Prostate gland (tissue), 2 donors: ENCODE measurements at regions of chr18 and their contacts with region 1.

Region 1: GRCh38 chr18:13216092-13216582 is 2.4 kb upstream of the LDLRAD4 start:
- DNase-seq: peak; percentile 81
- H3K4me3 ChIP-seq: no peak overlapping the region
- H3K27ac ChIP-seq: no peak overlapping the region
- H3K4me1 ChIP-seq: peaks cover 6% of the 10 kb centered on the region
- H3K27me3 ChIP-seq: no peaks in the 10 kb centered on the region
- CTCF ChIP-seq: peak; percentile 49 to 87 (median 81)
- POLR2A ChIP-seq: no peak

Region 2: DNA sequence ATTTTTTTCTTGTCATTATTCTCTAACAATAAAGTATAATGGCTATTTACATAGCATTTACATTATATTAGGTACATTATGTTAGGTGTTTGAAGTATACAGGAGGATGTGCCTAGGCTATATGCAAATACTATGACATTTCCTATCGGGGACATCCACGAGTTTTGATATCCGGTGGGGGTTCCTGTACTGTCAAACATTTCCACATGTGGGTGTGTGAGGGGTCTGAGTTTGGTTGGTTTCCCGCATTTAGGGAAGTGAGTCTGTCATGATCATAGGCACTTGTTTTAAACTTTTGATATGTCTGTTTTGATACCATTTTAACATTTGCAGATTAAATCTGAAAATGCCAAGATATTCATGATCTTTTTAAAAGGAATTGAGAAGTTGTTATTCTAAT is 149.0 kb before region 1 on chr18:
- intact Hi-C with region 1: no loop called
- DNase-seq: no peak
- H3K4me3 ChIP-seq: no peak overlapping the region
- H3K27ac ChIP-seq: no peak overlapping the region
- H3K4me1 ChIP-seq: no peaks in the 10 kb centered on the region
- H3K27me3 ChIP-seq: no peaks in the 10 kb centered on the region
- CTCF ChIP-seq: no peak
- POLR2A ChIP-seq: no peak

Region 3: GRCh38 chr18:13381944-13382365 is 165.8 kb after region 1 on chr18:
- intact Hi-C with region 1: loop called (anchors 5 kb)
- DNase-seq: peak; percentile 55
- H3K4me3 ChIP-seq: peak overlapping the region in 1 of 2 donors; percentile 24
- H3K27ac ChIP-seq: peak overlapping the region; percentile 47 to 74
- H3K4me1 ChIP-seq: peaks cover 12% of the 10 kb centered on the region
- H3K27me3 ChIP-seq: no peaks in the 10 kb centered on the region
- CTCF ChIP-seq: no peak
- POLR2A ChIP-seq: no peak

Region 4: GRCh38 chr18:13447626-13448334 is 231.6 kb after region 1 on chr18:
- intact Hi-C with region 1: loop called (anchors 5 kb)
- DNase-seq: no peak
- H3K4me3 ChIP-seq: no peak overlapping the region
- H3K27ac ChIP-seq: no peak overlapping the region
- H3K4me1 ChIP-seq: no peaks in the 10 kb centered on the region
- H3K27me3 ChIP-seq: no peaks in the 10 kb centered on the region
- CTCF ChIP-seq: no peak
- POLR2A ChIP-seq: no peak

Region 5: DNA sequence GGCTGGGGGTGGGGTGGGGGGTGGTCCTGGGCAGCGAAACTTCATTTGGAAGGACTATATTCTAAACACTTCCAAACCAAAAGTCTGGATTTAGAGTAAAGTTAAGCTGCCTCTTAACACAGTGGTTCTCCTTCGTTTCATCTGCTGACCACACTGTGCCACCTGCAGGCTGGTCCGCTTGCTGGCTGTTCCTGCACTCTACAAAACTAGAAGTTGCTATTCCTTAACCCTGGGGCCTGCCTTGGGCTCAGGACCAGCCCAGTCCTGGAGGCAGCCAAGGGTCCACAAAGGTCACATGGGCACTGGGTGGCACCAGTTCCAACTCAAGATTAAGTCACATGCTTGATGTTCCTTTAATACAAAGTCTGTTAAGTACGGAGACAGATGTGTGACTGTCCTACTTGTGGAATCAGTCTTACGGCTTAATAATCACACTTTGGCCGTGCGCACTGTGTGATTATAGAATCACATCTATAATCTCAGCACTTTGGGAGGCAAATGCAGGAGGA is 314.8 kb after region 1 on chr18:
- intact Hi-C with region 1: loop called (anchors 1 kb)
- DNase-seq: peak; percentile 38
- H3K4me3 ChIP-seq: no peak overlapping the region
- H3K27ac ChIP-seq: no peak overlapping the region
- H3K4me1 ChIP-seq: no peaks in the 10 kb centered on the region
- H3K27me3 ChIP-seq: no peaks in the 10 kb centered on the region
- CTCF ChIP-seq: peak in 3 of 4 experiments; percentile 35 to 56 (median 55)
- POLR2A ChIP-seq: no peak

Region 6: DNA sequence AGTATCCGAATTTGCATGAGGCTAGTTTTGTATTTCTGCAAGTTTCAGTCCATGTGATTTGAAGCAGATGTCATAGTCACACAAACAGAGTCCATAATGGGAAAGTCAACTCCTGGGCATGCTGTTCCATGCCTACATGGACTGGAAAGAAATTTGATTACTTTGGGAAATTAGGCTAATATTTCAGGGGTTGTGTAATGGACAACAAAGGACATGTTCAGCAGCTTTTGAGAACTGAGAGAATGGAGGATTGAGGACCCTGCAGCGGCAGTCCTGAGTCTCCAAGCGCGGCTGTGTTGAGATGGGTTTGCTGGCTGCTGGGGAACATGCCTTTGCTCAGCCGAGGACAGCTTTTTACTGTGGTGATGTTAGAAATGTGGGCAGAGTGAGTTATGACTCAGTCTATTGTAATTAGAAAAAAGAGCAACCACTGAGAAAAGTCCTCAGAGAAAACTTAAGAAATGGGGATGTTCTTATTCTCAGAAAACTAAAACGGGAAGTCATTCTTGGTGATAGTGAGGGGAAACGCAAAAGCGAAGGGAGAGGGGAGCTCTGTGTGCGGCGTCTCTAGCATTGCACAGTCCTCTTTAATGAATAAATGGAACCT is 361.1 kb after region 1 on chr18:
- intact Hi-C with region 1: no loop called
- DNase-seq: no peak
- H3K4me3 ChIP-seq: no peak overlapping the region
- H3K27ac ChIP-seq: no peak overlapping the region
- H3K4me1 ChIP-seq: no peaks in the 10 kb centered on the region
- H3K27me3 ChIP-seq: no peaks in the 10 kb centered on the region
- CTCF ChIP-seq: no peak
- POLR2A ChIP-seq: no peak

Region 7: DNA sequence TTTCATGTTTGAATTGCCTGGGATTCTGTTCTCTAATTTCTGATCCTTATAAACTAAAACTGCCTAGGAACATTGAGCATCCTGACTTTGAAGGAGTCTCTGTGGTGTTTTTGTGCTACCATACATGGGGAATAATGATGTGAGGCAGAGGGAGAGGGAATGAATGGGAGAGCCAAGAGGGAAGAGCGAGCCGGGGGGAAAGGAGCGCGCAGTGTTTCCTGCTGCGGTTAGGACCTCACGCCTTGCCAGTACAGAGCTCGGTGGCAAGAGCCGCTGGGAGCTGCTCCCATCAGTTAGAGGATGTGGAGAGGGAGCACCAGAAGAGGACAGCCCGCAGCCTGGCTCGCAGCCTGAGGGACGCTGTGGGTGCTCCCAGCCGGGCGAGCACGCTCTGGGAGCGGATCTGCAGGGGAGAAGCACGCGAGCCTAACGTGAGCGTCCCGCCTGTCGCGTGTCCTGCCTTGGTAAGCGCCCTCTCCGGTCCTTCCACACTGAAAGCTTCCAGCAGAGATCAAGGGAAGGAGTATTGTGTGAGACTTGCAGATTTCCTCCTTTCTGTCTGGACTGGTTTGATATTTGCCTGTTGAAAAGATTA is 395.6 kb after region 1 on chr18:
- intact Hi-C with region 1: loop called (anchors 5 kb)
- DNase-seq: no peak
- H3K4me3 ChIP-seq: peak overlapping the region; percentile 22 to 23
- H3K27ac ChIP-seq: peak overlapping the region; percentile 38 to 48
- H3K4me1 ChIP-seq: no peaks in the 10 kb centered on the region
- H3K27me3 ChIP-seq: no peaks in the 10 kb centered on the region
- CTCF ChIP-seq: no peak
- POLR2A ChIP-seq: no peak

Region 8: GRCh38 chr18:13629841-13630715 is 413.9 kb after region 1 on chr18:
- intact Hi-C with region 1: loop called (anchors 1 kb)
- DNase-seq: peak; percentile 37
- H3K4me3 ChIP-seq: no peak overlapping the region
- H3K27ac ChIP-seq: no peak overlapping the region
- H3K4me1 ChIP-seq: no peaks in the 10 kb centered on the region
- H3K27me3 ChIP-seq: no peaks in the 10 kb centered on the region
- CTCF ChIP-seq: peak; percentile 16 to 83 (median 72)
- POLR2A ChIP-seq: no peak

Region 9: GRCh38 chr18:13726232-13726971 is 510.3 kb after region 1 on chr18 and contains the starts of genes FAM210A and RNMT:
- intact Hi-C with region 1: loop called (anchors 5 kb)
- DNase-seq: peak; percentile 95
- H3K4me3 ChIP-seq: peak within 1 kb of the TSS; percentile 77 to 91
- H3K27ac ChIP-seq: peak within 1 kb of the TSS; percentile 88 to 93
- H3K4me1 ChIP-seq: no peaks in the 10 kb centered on the region
- H3K27me3 ChIP-seq: no peaks in the 10 kb centered on the region
- CTCF ChIP-seq: peak in 2 of 4 experiments; percentile 26 to 30
- POLR2A ChIP-seq: peak; percentile 80
- total RNA-seq, gene FAM210A: 10.3 to 12.4 TPM
- total RNA-seq, gene RNMT: 22.4 to 28.9 TPM